ENCODE measurements at regions of chr6 and their contacts with region 1.

Region 1: DNA sequence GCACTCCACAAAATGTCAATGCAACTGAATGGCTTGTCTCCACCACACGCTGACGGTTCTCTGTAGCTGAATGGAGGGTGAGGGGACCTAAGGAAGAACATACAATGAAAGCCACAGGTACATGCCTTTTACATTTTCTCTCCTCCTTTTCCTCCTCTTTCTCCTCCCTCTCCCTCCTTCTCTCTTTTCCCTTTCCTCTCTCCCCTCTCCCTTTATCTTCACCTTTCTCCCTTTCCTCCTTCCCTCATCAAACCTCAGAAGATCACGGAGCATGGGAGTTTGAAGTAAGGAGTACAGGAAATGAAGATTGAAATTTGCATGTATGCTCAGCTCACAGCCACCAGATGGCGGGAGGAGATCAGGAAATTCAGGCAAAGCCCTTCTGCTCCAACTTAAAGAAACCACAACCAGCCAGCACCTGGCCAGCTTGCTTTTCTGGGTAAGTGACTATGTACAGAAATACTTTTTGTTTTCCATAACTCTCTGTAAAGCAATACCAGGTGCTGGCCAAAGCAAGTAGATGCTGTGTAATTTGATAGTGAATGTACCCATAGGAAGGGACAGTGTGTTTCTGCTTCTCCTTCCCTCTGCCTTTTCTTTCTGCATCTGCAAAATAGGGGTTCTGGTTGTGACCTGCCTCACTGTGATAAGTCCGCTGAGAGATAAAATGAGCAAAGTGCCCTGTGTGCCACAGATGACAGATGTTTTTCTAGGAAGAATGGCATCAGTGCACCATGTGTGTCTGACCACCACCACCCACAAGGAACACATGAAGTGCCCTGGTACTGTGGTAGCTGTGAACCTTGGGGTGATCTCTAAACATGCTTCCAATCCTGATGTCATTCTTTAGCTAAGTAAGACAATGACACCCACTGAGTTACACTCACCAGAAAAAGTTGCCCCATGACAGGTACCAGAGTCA is 18.6 kb upstream of the FOXO3 start:
- H3K4me3 ChIP-seq: no peak overlapping the region
- H3K27ac ChIP-seq: no peak overlapping the region
- H3K4me1 ChIP-seq: no peaks in the 10 kb centered on the region
- CTCF ChIP-seq: peak; percentile 92

Region 2: GRCh38 chr6:108497883-108498282 is 44.2 kb before region 1 on chr6:
- CTCF ChIA-PET with region 1: no interaction called
- POLR2A ChIA-PET with region 1: no interaction called
- H3K4me3 ChIP-seq: no peak overlapping the region
- H3K27ac ChIP-seq: no peak overlapping the region
- H3K4me1 ChIP-seq: 0 out of 2 replicates have a peak, but pooled peaks cover 4% of the 10 kb centered on the region
- CTCF ChIP-seq: no peak

Region 3: GRCh38 chr6:108526739-108527174 is 15.3 kb before region 1 on chr6:
- CTCF ChIA-PET with region 1: interaction called, 21 read pairs
- POLR2A ChIA-PET with region 1: no interaction called
- H3K4me3 ChIP-seq: no peak overlapping the region
- H3K27ac ChIP-seq: no peak overlapping the region
- H3K4me1 ChIP-seq: no peaks in the 10 kb centered on the region
- CTCF ChIP-seq: no peak; the same call in 1 of the 2 replicates

Region 4: DNA sequence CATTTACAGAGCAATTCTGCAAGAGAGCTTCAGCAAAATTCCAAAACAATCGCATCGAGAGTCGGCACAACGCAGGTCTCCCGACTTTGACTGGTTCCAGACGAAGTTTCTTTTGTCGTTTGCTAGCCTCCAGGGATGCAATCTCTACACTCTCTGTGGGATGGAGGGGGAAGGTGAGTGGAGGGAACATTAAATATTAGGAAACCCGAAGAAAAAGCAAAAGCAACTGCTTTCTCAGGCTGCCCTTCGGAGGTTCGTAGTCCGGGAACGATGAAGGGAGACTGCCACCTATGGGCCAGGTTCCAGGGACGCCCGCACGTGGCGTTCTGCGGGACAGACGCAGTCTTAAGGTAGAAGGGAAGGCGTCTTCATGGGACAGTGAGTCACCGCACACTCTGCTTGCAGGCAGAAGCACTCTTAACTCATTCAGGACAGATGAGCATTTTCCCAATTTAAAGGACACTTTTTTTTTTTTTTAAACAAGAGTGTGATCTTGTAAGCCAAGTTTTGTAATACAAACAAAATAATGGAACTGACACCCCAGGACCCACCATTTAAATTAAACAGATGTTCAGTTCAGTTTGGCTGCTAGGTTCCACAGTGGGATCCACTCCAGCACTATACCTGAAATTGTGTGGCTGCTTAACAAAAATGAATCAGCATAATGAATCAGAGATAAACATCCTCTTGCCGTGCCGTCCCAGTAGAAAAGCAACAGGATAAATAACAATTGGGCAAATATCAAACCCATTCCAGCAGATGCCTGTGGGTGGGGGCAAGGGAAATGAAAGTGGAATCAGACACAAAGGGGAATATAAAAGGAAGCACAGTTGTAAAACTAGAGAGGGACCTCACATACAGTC is 240.3 kb after region 1 on chr6:
- CTCF ChIA-PET with region 1: interaction called, 24 read pairs
- POLR2A ChIA-PET with region 1: no interaction called
- H3K4me3 ChIP-seq: peak overlapping the region; percentile 40
- H3K27ac ChIP-seq: no peak overlapping the region; the same call in 1 of the 2 replicates
- H3K4me1 ChIP-seq: peaks cover 6% of the 10 kb centered on the region
- CTCF ChIP-seq: peak; percentile 91

Region 5: GRCh38 chr6:108835218-108835850 is 293.2 kb after region 1 on chr6:
- CTCF ChIA-PET with region 1: interaction called, 81 read pairs
- POLR2A ChIA-PET with region 1: no interaction called
- H3K4me3 ChIP-seq: no peak overlapping the region
- H3K27ac ChIP-seq: no peak overlapping the region
- H3K4me1 ChIP-seq: no peaks in the 10 kb centered on the region
- CTCF ChIP-seq: peak; percentile 92

Region 6: GRCh38 chr6:108896111-108896661 is 354.1 kb after region 1 on chr6:
- CTCF ChIA-PET with region 1: interaction called, 109 read pairs
- POLR2A ChIA-PET with region 1: interaction called, 7 read pairs
- H3K4me3 ChIP-seq: no peak overlapping the region
- H3K27ac ChIP-seq: no peak overlapping the region
- H3K4me1 ChIP-seq: no peaks in the 10 kb centered on the region
- CTCF ChIP-seq: no peak

Region 7: DNA sequence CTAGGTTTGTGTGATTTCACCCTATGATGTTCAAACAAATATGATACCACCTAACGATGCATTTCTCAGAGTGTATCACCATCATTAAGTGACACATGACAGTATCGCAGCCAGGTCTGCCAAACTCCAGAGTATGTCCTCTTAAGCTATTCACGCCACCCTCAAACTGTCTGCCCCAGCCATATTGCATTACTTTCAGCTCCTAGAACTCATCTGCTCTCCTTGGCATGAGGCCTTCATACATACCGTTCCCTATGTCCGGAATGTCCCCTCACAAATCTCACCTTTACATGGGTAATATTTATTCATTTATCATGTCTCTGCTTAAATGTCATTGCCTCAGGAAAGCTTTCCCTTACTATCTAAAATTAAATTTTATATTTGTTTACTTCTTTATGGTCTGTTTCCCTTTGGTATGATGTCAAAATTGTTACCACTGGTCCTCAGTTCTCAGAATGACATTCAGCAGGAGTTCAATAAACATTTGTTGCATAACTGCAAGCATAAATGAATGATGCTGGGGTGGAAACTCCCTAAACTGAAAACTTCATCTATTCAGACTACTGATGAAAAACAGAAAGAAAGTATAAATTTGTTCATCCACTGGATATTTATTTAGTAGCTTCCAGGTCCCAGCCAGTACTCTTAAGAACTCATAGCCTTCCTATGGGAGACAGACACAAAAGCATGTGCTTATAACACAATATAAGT is 549.4 kb after region 1 on chr6:
- CTCF ChIA-PET with region 1: no interaction called
- POLR2A ChIA-PET with region 1: no interaction called
- H3K4me3 ChIP-seq: no peak overlapping the region; the same call in 1 of the 2 replicates
- H3K27ac ChIP-seq: no peak overlapping the region
- H3K4me1 ChIP-seq: peaks cover 10% of the 10 kb centered on the region
- CTCF ChIP-seq: no peak

Measured in HEK293 (cell line).